ENCODE measurements at regions of chr3 and their contacts with region 1.

Region 1: GRCh38 chr3:128242818-128243601 is 89.7 kb downstream of the EEFSEC start:
- DNase-seq: no peak
- ATAC-seq: peak in 2 of 4 donors; percentile 23 to 37
- H3K4me3 ChIP-seq: no peak overlapping the region
- H3K27ac ChIP-seq: peak overlapping the region in 1 of 12 donors; percentile 53
- H3K4me1 ChIP-seq: peaks cover 0 to 10% (median under 1%) of the 10 kb centered on the region in 12 donors
- H3K27me3 ChIP-seq: no peaks in the 10 kb centered on the region
- CTCF ChIP-seq: no peak
- POLR2A ChIP-seq: no peak

Region 2: GRCh38 chr3:128395500-128396162 is 152.6 kb after region 1 on chr3:
- intact Hi-C with region 1: loop called in 1 of 10 experiments (anchors 10 kb)
- DNase-seq: peak; percentile 73 to 87 (median 79)
- ATAC-seq: peak in 3 of 4 donors; percentile 71 to 85 (median 74)
- H3K4me3 ChIP-seq: no peak overlapping the region
- H3K27ac ChIP-seq: peak overlapping the region in 8 of 12 donors; percentile 6 to 68 (median 32)
- H3K4me1 ChIP-seq: peaks cover 0 to 40% (median 18%) of the 10 kb centered on the region in 12 donors
- H3K27me3 ChIP-seq: no peaks in the 10 kb centered on the region
- CTCF ChIP-seq: no peak
- POLR2A ChIP-seq: no peak

Measured in heart left ventricle (tissue), 16 donors.